ENCODE measurements at regions of chr22 and their contacts with region 1.

Region 1: DNA sequence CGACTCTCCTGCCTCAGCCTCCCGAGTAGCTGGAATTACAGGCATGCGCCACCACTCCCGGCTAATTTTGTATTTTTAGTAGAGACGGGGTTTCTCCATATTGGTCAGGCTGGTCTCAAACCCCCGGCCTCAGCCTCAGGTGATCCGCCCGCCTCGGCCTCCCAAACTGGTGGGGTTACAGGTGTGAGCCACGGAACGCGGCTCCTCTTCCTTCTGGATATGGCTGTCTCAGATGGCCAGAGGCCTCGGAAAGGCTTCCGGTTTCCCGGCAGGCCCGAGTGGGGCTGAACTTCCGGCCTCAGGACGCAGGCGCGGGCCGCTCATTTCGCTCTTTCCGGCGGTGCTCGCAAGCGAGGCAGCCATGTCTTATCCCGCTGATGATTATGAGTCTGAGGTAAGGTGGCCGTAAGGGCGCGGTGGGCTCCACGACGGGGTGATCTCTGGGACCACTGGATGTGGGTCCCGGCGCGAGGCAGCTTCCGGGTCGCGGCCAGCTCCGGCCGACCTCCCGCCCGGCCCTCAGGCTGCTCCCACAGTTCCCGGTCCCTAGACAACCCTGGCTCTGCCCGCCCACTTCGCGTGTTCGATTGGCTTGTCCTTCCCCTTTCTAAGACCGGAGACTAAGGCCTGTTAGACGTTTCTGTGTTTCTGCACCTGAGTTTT is at the start of gene EIF3L:
- DNase-seq: peak; percentile 92
- ATAC-seq: peak; percentile 68
- H3K4me3 ChIP-seq: peak within 1 kb of the TSS; percentile 62 to 98 (median 90)
- H3K4me3 Mint-ChIP-seq: peak within 1 kb of the TSS; percentile 91
- H3K27ac ChIP-seq: peak within 1 kb of the TSS; percentile 81 to 90
- H3K27ac Mint-ChIP-seq: peak within 1 kb of the TSS; percentile 99
- H3K4me1 ChIP-seq: peaks cover 22 to 30% of the 10 kb centered on the region in 2 donors
- H3K4me1 Mint-ChIP-seq: peaks cover 43% of the 10 kb centered on the region
- H3K27me3 ChIP-seq: no peaks in the 10 kb centered on the region
- H3K27me3 Mint-ChIP-seq: no peaks in the 10 kb centered on the region
- CTCF ChIP-seq: no peak
- total RNA-seq, gene EIF3L: 526 and 560 TPM in 2 replicates

Region 2: DNA sequence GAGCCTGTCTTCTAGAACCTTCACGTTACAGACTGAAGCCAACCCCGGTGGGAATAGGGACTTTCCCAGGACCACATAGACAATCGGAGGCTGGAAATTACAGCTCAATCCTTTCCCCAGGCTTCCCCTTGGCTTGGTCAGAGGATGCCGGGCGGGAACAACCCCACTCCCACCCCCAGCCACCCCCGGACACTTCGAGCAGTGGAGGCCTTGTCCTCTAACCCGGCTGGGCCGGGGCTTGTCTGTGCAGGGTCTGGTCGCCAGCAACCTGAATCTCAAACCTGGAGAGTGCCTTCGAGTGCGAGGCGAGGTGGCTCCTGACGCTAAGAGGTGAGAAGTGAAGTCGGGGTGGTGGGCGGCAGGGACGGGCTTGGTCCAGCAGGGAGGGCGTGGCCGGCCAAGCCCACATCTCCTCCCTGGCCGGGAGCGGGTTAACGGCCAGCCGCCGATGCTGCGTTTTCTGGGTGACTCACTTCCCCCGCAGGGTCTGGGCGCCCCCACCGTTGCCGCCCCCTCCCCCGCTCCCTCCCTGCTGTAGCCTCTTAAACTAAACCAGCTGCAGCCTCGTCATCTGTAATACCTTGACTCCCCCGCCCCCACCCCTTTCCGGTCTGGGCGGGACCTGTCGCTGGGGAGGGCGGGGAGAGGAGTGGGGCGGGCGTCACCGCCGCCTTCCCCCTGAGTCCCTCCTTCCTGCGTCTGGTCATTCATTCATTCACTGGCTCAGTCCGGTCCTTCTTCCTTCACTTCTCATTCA is 172.3 kb before region 1 on chr22:
- CTCF ChIA-PET with region 1: interaction called, 4 read pairs
- POLR2A ChIA-PET with region 1: interaction called, 5 read pairs
- intact Hi-C with region 1: loop called (anchors 2 kb)
- DNase-seq: peak; percentile 95
- ATAC-seq: peak; percentile 83
- H3K4me3 ChIP-seq: peak overlapping the region; percentile 73 to 92 (median 81)
- H3K4me3 Mint-ChIP-seq: peak overlapping the region; percentile 96
- H3K27ac ChIP-seq: peak overlapping the region; percentile 98
- H3K27ac Mint-ChIP-seq: peak overlapping the region; percentile 97
- H3K4me1 ChIP-seq: peaks cover 34 to 63% of the 10 kb centered on the region in 2 donors
- H3K4me1 Mint-ChIP-seq: peaks cover 56% of the 10 kb centered on the region
- H3K27me3 ChIP-seq: no peaks in the 10 kb centered on the region
- H3K27me3 Mint-ChIP-seq: no peaks in the 10 kb centered on the region
- CTCF ChIP-seq: no peak

Region 3: GRCh38 chr22:37807410-37808293 is 41.6 kb before region 1 on chr22 and contains the start of gene GCAT:
- CTCF ChIA-PET with region 1: no interaction called
- POLR2A ChIA-PET with region 1: no interaction called
- intact Hi-C with region 1: loop called (anchors 1 kb)
- DNase-seq: peak; percentile 88
- ATAC-seq: peak; percentile 97
- H3K4me3 ChIP-seq: peak within 1 kb of the TSS; percentile 17 to 61 (median 53)
- H3K4me3 Mint-ChIP-seq: peak within 1 kb of the TSS; percentile 77
- H3K27ac ChIP-seq: no peak within 1 kb of the TSS
- H3K27ac Mint-ChIP-seq: no peak within 1 kb of the TSS
- H3K4me1 ChIP-seq: peaks cover 51 to 60% of the 10 kb centered on the region in 2 donors
- H3K4me1 Mint-ChIP-seq: peaks cover 33% of the 10 kb centered on the region
- H3K27me3 ChIP-seq: peaks cover 0 to 91% (median 51%) of the 10 kb centered on the region in 4 experiments
- H3K27me3 Mint-ChIP-seq: peaks cover 58% of the 10 kb centered on the region
- CTCF ChIP-seq: no peak
- total RNA-seq, gene GCAT: 0.47 TPM in 1 of 2 replicates, not detected in the other

Region 4: GRCh38 chr22:37824674-37825641 is 24.3 kb before region 1 on chr22:
- CTCF ChIA-PET with region 1: no interaction called
- POLR2A ChIA-PET with region 1: no interaction called
- intact Hi-C with region 1: no loop called
- DNase-seq: peak; percentile 45
- ATAC-seq: no peak
- H3K4me3 ChIP-seq: peak overlapping the region in 1 of 5 experiments; percentile 15
- H3K4me3 Mint-ChIP-seq: peak overlapping the region; percentile 72
- H3K27ac ChIP-seq: no peak overlapping the region
- H3K27ac Mint-ChIP-seq: no peak overlapping the region
- H3K4me1 ChIP-seq: peaks cover 0 to 2% of the 10 kb centered on the region in 2 donors
- H3K4me1 Mint-ChIP-seq: peaks cover 6% of the 10 kb centered on the region
- H3K27me3 ChIP-seq: peaks cover 0 to 22% (median 7%) of the 10 kb centered on the region in 4 experiments
- H3K27me3 Mint-ChIP-seq: peaks cover 24% of the 10 kb centered on the region
- CTCF ChIP-seq: no peak

Region 5: DNA sequence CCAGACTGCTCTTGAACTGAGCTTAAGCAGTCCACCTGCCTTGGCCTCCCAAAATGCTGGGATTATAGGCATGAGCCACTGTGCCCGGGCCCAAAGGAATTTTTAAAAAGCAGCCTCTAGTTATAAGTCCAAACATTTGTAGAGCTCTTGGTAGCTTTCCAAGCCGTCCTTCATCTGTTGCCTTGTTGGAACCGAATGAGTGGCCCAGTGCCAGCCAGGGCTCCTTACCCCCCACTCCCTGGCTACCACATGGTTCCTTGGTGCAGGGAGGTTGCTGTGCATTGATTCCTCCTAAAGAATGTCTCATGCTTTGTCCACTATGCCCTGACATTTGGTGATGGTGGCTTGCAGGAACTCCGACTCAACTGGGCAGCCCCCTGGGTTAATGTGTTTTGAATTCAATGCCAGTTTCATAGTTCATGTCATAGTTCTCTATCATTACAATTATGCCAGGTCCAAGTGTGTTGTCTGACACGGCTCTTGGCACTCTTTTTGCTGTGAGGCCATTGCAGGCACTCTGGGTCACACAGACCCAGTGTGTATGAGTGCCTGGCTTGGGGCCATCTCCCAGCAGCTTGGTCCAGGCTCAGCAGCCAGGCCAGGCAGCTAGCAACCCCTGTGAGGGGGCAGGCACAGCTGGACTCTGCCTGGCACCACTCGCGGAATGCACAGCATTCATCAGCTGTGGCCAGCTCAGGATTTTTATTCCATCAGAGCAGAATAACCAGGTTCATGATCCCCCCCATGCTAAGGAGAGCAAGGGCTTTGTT is 43.5 kb after region 1 on chr22:
- CTCF ChIA-PET with region 1: no interaction called
- POLR2A ChIA-PET with region 1: no interaction called
- intact Hi-C with region 1: no loop called
- DNase-seq: no peak
- ATAC-seq: no peak
- H3K4me3 ChIP-seq: no peak overlapping the region
- H3K4me3 Mint-ChIP-seq: no peak overlapping the region
- H3K27ac ChIP-seq: no peak overlapping the region
- H3K27ac Mint-ChIP-seq: no peak overlapping the region
- H3K4me1 ChIP-seq: peaks cover 11 to 19% of the 10 kb centered on the region in 2 donors
- H3K4me1 Mint-ChIP-seq: peaks cover 10% of the 10 kb centered on the region
- H3K27me3 ChIP-seq: no peaks in the 10 kb centered on the region
- H3K27me3 Mint-ChIP-seq: no peaks in the 10 kb centered on the region
- CTCF ChIP-seq: no peak

Region 6: GRCh38 chr22:37905534-37906363 is 56.5 kb after region 1 on chr22 and contains the start of gene MICALL1:
- CTCF ChIA-PET with region 1: interaction called, 4 read pairs
- POLR2A ChIA-PET with region 1: interaction called, 3 read pairs
- intact Hi-C with region 1: loop called (anchors 1 kb)
- DNase-seq: peak; percentile 85
- ATAC-seq: peak; percentile 93
- H3K4me3 ChIP-seq: peak within 1 kb of the TSS in 4 of 5 experiments; percentile 36 to 86 (median 58)
- H3K4me3 Mint-ChIP-seq: peak within 1 kb of the TSS; percentile 86
- H3K27ac ChIP-seq: peak within 1 kb of the TSS in 1 of 2 donors; percentile 73
- H3K27ac Mint-ChIP-seq: peak within 1 kb of the TSS; percentile 86
- H3K4me1 ChIP-seq: peaks cover 10 to 16% of the 10 kb centered on the region in 2 donors
- H3K4me1 Mint-ChIP-seq: peaks cover 28% of the 10 kb centered on the region
- H3K27me3 ChIP-seq: no peaks in the 10 kb centered on the region
- H3K27me3 Mint-ChIP-seq: no peaks in the 10 kb centered on the region
- CTCF ChIP-seq: no peak
- total RNA-seq, gene MICALL1: 34.6 and 34.9 TPM in 2 replicates

Region 7: GRCh38 chr22:38080850-38081635 is 231.8 kb after region 1 on chr22:
- CTCF ChIA-PET with region 1: no interaction called
- POLR2A ChIA-PET with region 1: no interaction called
- intact Hi-C with region 1: no loop called
- DNase-seq: peak; percentile 36
- ATAC-seq: no peak
- H3K4me3 ChIP-seq: peak overlapping the region in 2 of 5 experiments; percentile 11 to 30
- H3K4me3 Mint-ChIP-seq: peak overlapping the region; percentile 53
- H3K27ac ChIP-seq: no peak overlapping the region
- H3K27ac Mint-ChIP-seq: no peak overlapping the region
- H3K4me1 ChIP-seq: peaks cover 17 to 18% of the 10 kb centered on the region in 2 donors
- H3K4me1 Mint-ChIP-seq: peaks cover 5% of the 10 kb centered on the region
- H3K27me3 ChIP-seq: peaks cover 0 to 37% (median 18%) of the 10 kb centered on the region in 4 experiments
- H3K27me3 Mint-ChIP-seq: peaks cover 16% of the 10 kb centered on the region
- CTCF ChIP-seq: no peak

Region 8: GRCh38 chr22:38201710-38202436 is 352.7 kb after region 1 on chr22 and contains the start of gene MAFF:
- CTCF ChIA-PET with region 1: no interaction called
- POLR2A ChIA-PET with region 1: no interaction called
- intact Hi-C with region 1: loop called (anchors 2 kb)
- DNase-seq: peak; percentile 87
- ATAC-seq: peak; percentile 77
- H3K4me3 ChIP-seq: peak within 1 kb of the TSS; percentile 49 to 78 (median 67)
- H3K4me3 Mint-ChIP-seq: peak within 1 kb of the TSS; percentile 90
- H3K27ac ChIP-seq: peak within 1 kb of the TSS; percentile 38 to 66
- H3K27ac Mint-ChIP-seq: peak within 1 kb of the TSS; percentile 83
- H3K4me1 ChIP-seq: peaks cover 25 to 33% of the 10 kb centered on the region in 2 donors
- H3K4me1 Mint-ChIP-seq: peaks cover 44% of the 10 kb centered on the region
- H3K27me3 ChIP-seq: no peaks in the 10 kb centered on the region
- H3K27me3 Mint-ChIP-seq: no peaks in the 10 kb centered on the region
- CTCF ChIP-seq: no peak
- total RNA-seq, gene MAFF: 4.8 and 5.3 TPM in 2 replicates

Measured in B cell (primary cell).